A673 (cell line): ENCODE measurements at regions of chr12 and their contacts with region 1.

Region 1: GRCh38 chr12:57005980-57006808 is at the start of gene ZBTB39:
- DNase-seq: peak; percentile 85
- H3K4me3 ChIP-seq: peak within 1 kb of the TSS; percentile 95
- H3K27ac ChIP-seq: peak within 1 kb of the TSS; percentile 91
- H3K4me1 ChIP-seq: peaks cover 6% of the 10 kb centered on the region
- H3K27me3 ChIP-seq: no peaks in the 10 kb centered on the region
- CTCF ChIP-seq: peak; percentile 65
- total RNA-seq, gene ZBTB39: 17.4 and 18.2 TPM in 2 replicates

Region 2: DNA sequence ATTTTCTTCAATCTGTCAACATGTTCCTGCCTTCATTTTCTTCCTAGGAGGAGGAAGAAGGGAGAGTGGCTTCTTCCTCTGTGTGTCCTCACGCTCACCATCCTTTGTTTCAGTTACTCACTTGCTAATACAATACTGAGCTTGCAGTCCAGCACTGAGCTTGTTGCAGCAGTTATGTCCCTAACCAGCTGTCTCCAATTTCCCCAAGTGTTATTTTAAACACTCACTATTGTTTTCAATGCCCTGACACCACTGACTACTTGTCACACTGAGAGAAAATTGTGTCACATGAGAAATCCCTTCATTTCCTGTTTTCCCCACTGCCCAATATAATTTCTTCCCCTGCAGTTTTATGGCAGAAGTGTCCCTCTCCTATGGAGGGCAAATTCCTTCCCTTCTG is 189.7 kb before region 1 on chr12:
- CTCF ChIA-PET with region 1: no interaction called
- POLR2A ChIA-PET with region 1: interaction called, 12 read pairs
- intact Hi-C with region 1: no loop called
- DNase-seq: peak; percentile 42
- H3K4me3 ChIP-seq: no peak overlapping the region
- H3K27ac ChIP-seq: peak overlapping the region; percentile 1
- H3K4me1 ChIP-seq: peaks cover 11% of the 10 kb centered on the region
- H3K27me3 ChIP-seq: no peaks in the 10 kb centered on the region
- CTCF ChIP-seq: no peak

Region 3: DNA sequence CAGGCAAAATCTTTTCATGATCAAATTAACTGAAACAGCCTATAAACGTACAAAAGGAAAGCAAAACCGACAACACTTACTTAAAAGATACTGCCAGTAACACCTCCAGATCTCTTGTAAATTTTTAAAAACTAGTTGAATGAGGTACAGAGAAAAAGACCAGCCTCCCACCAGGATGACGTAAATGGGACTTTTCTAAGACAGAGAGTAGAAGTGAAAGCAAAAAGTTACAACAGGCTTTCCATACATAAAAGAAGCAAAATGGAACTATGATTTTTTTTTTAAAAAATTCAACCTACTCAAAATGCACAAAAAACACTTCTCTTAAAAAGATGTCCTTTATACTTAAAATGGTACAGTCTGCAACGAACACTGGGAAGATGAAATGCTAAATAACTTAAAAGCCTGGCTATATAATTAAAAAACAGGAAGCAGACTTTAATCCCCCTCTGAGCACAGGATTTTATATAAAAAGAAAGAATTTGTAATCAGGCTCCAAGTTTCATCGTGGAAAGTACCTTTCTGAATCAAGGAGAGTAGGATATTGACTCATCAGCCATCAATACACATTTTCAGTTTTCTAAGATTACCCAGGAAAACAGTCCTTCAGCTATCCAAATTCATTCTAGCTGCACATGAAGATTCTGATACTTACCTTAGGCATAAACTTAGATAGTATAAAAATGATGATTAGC is 57.9 kb after region 1 on chr12:
- CTCF ChIA-PET with region 1: no interaction called
- POLR2A ChIA-PET with region 1: no interaction called
- intact Hi-C with region 1: loop called (anchors 2 kb)
- DNase-seq: peak; percentile 68
- H3K4me3 ChIP-seq: peak overlapping the region; percentile 31
- H3K27ac ChIP-seq: peak overlapping the region; percentile 77
- H3K4me1 ChIP-seq: peaks cover 29% of the 10 kb centered on the region
- H3K27me3 ChIP-seq: no peaks in the 10 kb centered on the region
- CTCF ChIP-seq: no peak

Region 4: GRCh38 chr12:57182921-57183790 is 177.0 kb after region 1 on chr12:
- CTCF ChIA-PET with region 1: no interaction called
- POLR2A ChIA-PET with region 1: no interaction called
- intact Hi-C with region 1: loop called (anchors 5 kb)
- DNase-seq: peak; percentile 79
- H3K4me3 ChIP-seq: no peak overlapping the region
- H3K27ac ChIP-seq: no peak overlapping the region
- H3K4me1 ChIP-seq: no peaks in the 10 kb centered on the region
- H3K27me3 ChIP-seq: no peaks in the 10 kb centered on the region
- CTCF ChIP-seq: peak; percentile 91

Region 5: DNA sequence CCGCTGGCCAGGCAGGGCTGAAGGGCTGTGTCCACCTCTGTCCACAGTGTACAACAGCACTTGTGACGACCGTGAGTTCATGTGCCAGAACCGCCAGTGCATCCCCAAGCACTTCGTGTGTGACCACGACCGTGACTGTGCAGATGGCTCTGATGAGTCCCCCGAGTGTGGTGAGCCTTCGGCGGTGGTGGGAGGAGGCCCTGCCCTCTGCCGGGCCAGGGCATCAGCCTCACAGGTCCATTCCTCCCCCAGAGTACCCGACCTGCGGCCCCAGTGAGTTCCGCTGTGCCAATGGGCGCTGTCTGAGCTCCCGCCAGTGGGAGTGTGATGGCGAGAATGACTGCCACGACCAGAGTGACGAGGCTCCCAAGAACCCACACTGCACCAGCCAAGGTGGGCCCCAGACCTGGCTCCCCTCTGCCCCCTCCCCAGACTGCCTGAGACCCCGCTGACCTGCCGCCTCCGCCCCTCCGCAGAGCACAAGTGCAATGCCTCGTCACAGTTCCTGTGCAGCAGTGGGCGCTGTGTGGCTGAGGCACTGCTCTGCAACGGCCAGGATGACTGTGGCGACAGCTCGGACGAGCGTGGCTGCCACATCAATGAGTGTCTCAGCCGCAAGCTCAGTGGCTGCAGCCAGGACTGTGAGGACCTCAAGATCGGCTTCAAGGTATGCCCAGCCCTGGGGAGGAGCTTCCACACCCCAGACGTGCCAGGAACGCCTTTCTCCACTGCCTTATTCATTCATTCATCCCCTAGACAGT is 189.6 kb after region 1 on chr12:
- CTCF ChIA-PET with region 1: no interaction called
- POLR2A ChIA-PET with region 1: no interaction called
- intact Hi-C with region 1: no loop called
- DNase-seq: no peak
- H3K4me3 ChIP-seq: no peak overlapping the region
- H3K27ac ChIP-seq: no peak overlapping the region
- H3K4me1 ChIP-seq: no peaks in the 10 kb centered on the region
- H3K27me3 ChIP-seq: no peaks in the 10 kb centered on the region
- CTCF ChIP-seq: no peak

Region 6: GRCh38 chr12:58346032-58346632 is 1339.9 kb after region 1 on chr12:
- CTCF ChIA-PET with region 1: no interaction called
- POLR2A ChIA-PET with region 1: no interaction called
- intact Hi-C with region 1: no loop called
- DNase-seq: peak; percentile 74
- H3K4me3 ChIP-seq: no peak overlapping the region
- H3K27ac ChIP-seq: no peak overlapping the region
- H3K4me1 ChIP-seq: peaks cover 25% of the 10 kb centered on the region
- H3K27me3 ChIP-seq: no peaks in the 10 kb centered on the region
- CTCF ChIP-seq: peak; percentile 81